A673 (cell line): ENCODE measurements at regions of chr11 and their contacts with region 1.

Region 1: DNA sequence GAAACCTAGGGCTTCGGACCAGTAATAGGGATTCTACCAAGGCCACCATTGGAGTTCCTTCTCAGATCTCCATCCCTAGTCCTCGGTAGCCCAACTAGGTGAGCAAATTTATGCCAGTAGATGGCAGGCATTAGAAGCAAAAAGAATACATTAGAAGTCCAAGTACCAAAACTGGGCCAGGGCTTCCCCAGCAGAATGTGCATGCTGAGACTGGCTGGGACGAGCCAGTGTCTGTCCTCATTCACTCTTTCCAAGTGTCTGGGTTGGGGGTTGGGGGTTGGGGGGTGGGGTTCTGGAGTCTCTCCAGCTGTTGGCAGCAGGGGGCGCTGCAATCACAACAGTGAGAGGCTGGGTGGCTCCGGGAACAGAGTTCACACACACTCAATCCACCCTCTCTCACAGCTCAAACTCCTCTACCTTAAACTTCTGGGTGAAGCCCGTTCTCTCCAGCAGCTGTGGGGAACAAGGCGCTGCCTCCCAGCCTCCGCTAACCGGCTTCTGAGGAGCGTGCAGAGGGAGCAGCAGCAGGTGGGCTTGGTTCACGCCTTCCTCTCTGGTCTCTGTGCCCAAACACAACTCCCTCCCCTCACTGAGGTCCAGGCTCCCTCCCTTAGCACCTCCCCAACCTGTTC is 57.5 kb downstream of the BTG4 start:
- DNase-seq: peak; percentile 85
- H3K4me3 ChIP-seq: no peak overlapping the region
- H3K27ac ChIP-seq: no peak overlapping the region
- H3K4me1 ChIP-seq: peaks cover 10% of the 10 kb centered on the region
- H3K27me3 ChIP-seq: no peaks in the 10 kb centered on the region
- CTCF ChIP-seq: peak; percentile 59

Region 2: GRCh38 chr11:110679323-110679975 is 775.2 kb before region 1 on chr11:
- CTCF ChIA-PET with region 1: no interaction called
- POLR2A ChIA-PET with region 1: no interaction called
- intact Hi-C with region 1: no loop called
- DNase-seq: no peak
- H3K4me3 ChIP-seq: no peak overlapping the region
- H3K27ac ChIP-seq: no peak overlapping the region
- H3K4me1 ChIP-seq: peaks cover 18% of the 10 kb centered on the region
- H3K27me3 ChIP-seq: no peaks in the 10 kb centered on the region
- CTCF ChIP-seq: no peak

Region 3: GRCh38 chr11:111528557-111528956 is 73.9 kb after region 1 on chr11:
- CTCF ChIA-PET with region 1: interaction called, 5 read pairs
- POLR2A ChIA-PET with region 1: no interaction called
- intact Hi-C with region 1: loop called (anchors 2 kb)
- DNase-seq: peak; percentile 40
- H3K4me3 ChIP-seq: no peak overlapping the region
- H3K27ac ChIP-seq: no peak overlapping the region
- H3K4me1 ChIP-seq: no peaks in the 10 kb centered on the region
- H3K27me3 ChIP-seq: no peaks in the 10 kb centered on the region
- CTCF ChIP-seq: peak; percentile 42; the same call in 1 of the 2 replicates

Region 4: GRCh38 chr11:111565114-111565720 is 110.5 kb after region 1 on chr11:
- CTCF ChIA-PET with region 1: no interaction called
- POLR2A ChIA-PET with region 1: no interaction called
- intact Hi-C with region 1: loop called (anchors 5 kb)
- DNase-seq: peak; percentile 88
- H3K4me3 ChIP-seq: no peak overlapping the region
- H3K27ac ChIP-seq: peak overlapping the region; percentile 43
- H3K4me1 ChIP-seq: no peaks in the 10 kb centered on the region
- H3K27me3 ChIP-seq: no peaks in the 10 kb centered on the region
- CTCF ChIP-seq: peak; percentile 91